Activated B cell treated with CpG ODN at 0.5 μM for 24 hours (primary cell): ENCODE measurements at regions of chr18 and their contacts with region 1.

Region 1: GRCh38 chr18:11654736-11655605 is 34.1 kb upstream of the GNAL start:
- DNase-seq: peak; percentile 24
- ATAC-seq: no peak
- H3K4me3 Mint-ChIP-seq: no peak overlapping the region
- H3K27ac Mint-ChIP-seq: no peak overlapping the region
- H3K4me1 Mint-ChIP-seq: peaks cover 6% of the 10 kb centered on the region
- H3K27me3 Mint-ChIP-seq: peaks cover 51% of the 10 kb centered on the region
- CTCF ChIP-seq: no peak

Region 2: DNA sequence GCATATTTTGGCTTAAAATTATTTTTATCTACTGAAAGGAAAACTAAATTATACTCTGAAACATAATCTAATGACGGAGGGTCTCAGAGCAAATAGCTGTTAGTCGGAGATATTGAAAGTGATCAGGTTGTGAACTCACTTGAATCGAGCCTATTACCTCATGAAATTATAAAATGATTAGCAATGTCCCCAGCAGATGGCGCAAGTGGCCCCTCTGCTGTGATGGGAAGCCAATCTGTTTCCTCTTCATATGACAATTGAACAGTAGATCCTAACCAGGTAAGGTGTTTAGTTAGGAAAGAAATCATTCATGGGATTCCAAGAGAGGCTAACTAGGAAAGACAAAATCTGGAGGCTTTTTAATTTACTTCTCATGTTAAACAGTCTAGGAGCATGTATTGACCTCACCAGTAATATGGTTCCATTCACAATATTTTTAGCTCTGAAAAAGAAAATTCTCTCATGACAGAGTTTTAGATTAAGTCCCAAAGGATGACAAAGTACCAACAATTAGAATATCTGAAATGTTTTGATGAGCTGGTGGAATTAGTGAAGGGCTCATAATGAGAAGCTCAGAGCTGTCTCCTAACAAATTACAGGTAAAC is 283.0 kb after region 1 on chr18:
- CTCF ChIA-PET with region 1: no interaction called
- POLR2A ChIA-PET with region 1: no interaction called
- intact Hi-C with region 1: loop called (anchors 5 kb)
- DNase-seq: peak; percentile 47
- ATAC-seq: peak; percentile 62
- H3K4me3 Mint-ChIP-seq: no peak overlapping the region
- H3K27ac Mint-ChIP-seq: no peak overlapping the region
- H3K4me1 Mint-ChIP-seq: no peaks in the 10 kb centered on the region
- H3K27me3 Mint-ChIP-seq: no peaks in the 10 kb centered on the region
- CTCF ChIP-seq: peak; percentile 34

Region 3: GRCh38 chr18:12038639-12039417 is 383.9 kb after region 1 on chr18:
- CTCF ChIA-PET with region 1: interaction called, 15 read pairs
- POLR2A ChIA-PET with region 1: no interaction called
- intact Hi-C with region 1: loop called (anchors 1 kb)
- DNase-seq: peak; percentile 76
- ATAC-seq: peak; percentile 98
- H3K4me3 Mint-ChIP-seq: peak overlapping the region; percentile 76
- H3K27ac Mint-ChIP-seq: no peak overlapping the region
- H3K4me1 Mint-ChIP-seq: peaks cover 12% of the 10 kb centered on the region
- H3K27me3 Mint-ChIP-seq: peaks cover 7% of the 10 kb centered on the region
- CTCF ChIP-seq: peak; percentile 83